Activated T-helper 1 cell treated with anti-CD3 and anti-CD28 coated beads, Interleukin-12 subunit alpha, Interleukin-12 subunit beta, Interleukin-2, Interleukin-4 antibody, amounts not matched to agents 30 ng/mL and 10 ng/mL and 1 ng/mL, durations not matched to agents 14 hours and 24 hours and 36 hours (primary cell): ENCODE measurements at regions of chr9 and their contacts with region 1.

Region 1: DNA sequence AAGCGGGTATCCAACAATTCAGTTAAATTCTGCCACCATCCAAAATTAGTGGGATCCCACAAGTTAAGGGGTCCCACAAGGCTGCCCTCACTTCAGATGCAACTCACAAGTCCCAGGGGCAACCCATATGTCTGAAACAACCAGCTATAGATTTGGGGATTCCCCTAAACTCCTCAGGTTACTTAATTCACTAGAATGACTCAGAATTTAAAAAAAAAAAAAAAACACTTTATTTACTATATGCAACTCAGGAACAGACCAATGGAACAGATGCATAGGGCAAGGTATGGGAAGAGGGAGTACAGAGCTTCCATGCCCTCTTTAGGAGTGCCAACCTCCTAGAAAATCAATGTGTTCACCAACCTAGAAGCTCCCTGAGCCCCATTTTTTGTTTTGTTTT is 15.1 kb downstream of the AUH start:
- DNase-seq: no peak
- H3K4me3 Mint-ChIP-seq: no peak overlapping the region
- H3K27ac Mint-ChIP-seq: peak overlapping the region; percentile 67
- H3K4me1 Mint-ChIP-seq: peaks cover 56% of the 10 kb centered on the region
- H3K27me3 Mint-ChIP-seq: no peaks in the 10 kb centered on the region

Region 2: DNA sequence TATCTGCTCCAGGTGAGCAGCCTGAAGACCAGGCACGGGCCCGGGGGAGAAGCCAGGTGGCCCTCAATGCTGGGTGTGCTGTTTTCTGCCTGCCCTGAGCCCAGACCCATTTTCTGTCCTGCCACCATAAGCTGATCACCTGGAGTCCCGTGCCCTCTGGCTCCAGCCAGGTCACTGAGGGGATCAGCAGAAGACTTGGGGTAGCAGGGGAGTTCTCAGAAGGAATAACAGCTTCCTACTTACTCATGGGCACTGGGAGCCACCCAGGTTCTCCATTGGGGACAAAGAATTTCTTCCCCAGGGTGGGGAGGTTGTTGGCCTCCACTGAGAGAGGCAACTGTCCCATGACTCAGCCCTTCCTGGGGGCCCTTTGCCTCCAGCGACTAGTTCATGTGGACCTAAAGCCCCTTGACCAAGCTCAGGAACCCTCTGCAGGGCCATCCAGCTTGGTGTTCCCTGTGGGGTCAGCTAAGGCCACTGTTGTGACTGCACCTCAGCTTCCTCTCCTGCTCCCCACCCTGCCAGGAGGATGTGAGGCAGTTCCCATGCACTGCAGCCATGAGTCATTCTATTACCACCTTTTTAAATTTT is 160.0 kb before region 1 on chr9:
- intact Hi-C with region 1: no loop called
- DNase-seq: no peak
- H3K4me3 Mint-ChIP-seq: no peak overlapping the region
- H3K27ac Mint-ChIP-seq: peak overlapping the region; percentile 82
- H3K4me1 Mint-ChIP-seq: peaks cover 50% of the 10 kb centered on the region
- H3K27me3 Mint-ChIP-seq: no peaks in the 10 kb centered on the region

Region 3: DNA sequence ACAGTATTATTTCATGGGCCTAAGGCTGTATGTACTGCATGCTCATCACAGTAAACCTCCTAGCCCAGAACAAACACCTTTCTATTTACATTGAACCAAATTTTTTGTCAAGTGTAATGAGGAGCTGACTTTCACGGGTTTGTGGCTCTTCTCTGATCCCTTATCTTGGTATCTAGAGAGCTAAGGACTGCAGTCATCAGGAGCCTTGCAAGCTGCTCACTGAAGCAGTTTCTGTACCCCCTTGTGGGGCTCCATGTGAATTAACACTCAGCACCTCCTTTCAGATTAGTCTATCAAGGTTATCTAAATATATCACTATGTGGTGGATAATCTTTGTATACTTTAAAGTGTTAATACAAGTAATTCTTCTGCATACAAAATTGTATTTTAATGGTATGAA is 93.2 kb before region 1 on chr9:
- intact Hi-C with region 1: loop called (anchors 1 kb)
- DNase-seq: peak; percentile 51
- H3K4me3 Mint-ChIP-seq: no peak overlapping the region
- H3K27ac Mint-ChIP-seq: no peak overlapping the region
- H3K4me1 Mint-ChIP-seq: peaks cover 62% of the 10 kb centered on the region
- H3K27me3 Mint-ChIP-seq: no peaks in the 10 kb centered on the region

Region 4: GRCh38 chr9:91395553-91396471 is 49.2 kb after region 1 on chr9:
- intact Hi-C with region 1: loop called (anchors 1 kb)
- DNase-seq: peak; percentile 33
- H3K4me3 Mint-ChIP-seq: peak overlapping the region; percentile 73
- H3K27ac Mint-ChIP-seq: peak overlapping the region; percentile 84
- H3K4me1 Mint-ChIP-seq: peaks cover 21% of the 10 kb centered on the region
- H3K27me3 Mint-ChIP-seq: peaks cover 11% of the 10 kb centered on the region

Region 5: DNA sequence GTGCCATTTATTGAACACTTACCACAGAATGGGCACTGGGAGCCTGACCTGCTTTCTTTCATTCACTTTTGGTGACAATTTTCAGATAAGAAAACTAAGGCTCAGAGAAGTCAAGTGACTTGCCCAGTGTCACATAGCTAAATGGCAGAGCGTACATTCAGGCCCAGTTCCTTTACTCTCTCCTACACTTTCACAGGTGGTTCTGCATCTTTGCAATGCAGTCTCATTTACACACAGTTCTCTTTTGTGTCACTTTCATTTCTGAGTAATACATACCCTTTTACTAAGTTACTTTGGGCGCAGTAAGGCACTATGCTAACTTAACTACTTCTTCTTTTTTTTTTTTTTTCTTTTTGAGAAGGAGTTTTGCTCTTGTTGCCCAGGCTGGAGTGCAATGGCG is 68.6 kb after region 1 on chr9:
- intact Hi-C with region 1: loop called (anchors 1 kb)
- DNase-seq: no peak
- H3K4me3 Mint-ChIP-seq: no peak overlapping the region
- H3K27ac Mint-ChIP-seq: peak overlapping the region; percentile 85
- H3K4me1 Mint-ChIP-seq: peaks cover 92% of the 10 kb centered on the region
- H3K27me3 Mint-ChIP-seq: no peaks in the 10 kb centered on the region